Brain microvascular endothelial cell (primary cell): ENCODE measurements at regions of chr6 and their contacts with region 1.

Region 1: GRCh38 chr6:140052756-140053729 is 678.6 kb upstream of the CITED2 start:
- DNase-seq: peak; percentile 51
- H3K4me3 ChIP-seq: no peak overlapping the region
- H3K27ac ChIP-seq: peak overlapping the region; percentile 92
- H3K27me3 ChIP-seq: no peaks in the 10 kb centered on the region
- CTCF ChIP-seq: peak; percentile 54

Region 2: DNA sequence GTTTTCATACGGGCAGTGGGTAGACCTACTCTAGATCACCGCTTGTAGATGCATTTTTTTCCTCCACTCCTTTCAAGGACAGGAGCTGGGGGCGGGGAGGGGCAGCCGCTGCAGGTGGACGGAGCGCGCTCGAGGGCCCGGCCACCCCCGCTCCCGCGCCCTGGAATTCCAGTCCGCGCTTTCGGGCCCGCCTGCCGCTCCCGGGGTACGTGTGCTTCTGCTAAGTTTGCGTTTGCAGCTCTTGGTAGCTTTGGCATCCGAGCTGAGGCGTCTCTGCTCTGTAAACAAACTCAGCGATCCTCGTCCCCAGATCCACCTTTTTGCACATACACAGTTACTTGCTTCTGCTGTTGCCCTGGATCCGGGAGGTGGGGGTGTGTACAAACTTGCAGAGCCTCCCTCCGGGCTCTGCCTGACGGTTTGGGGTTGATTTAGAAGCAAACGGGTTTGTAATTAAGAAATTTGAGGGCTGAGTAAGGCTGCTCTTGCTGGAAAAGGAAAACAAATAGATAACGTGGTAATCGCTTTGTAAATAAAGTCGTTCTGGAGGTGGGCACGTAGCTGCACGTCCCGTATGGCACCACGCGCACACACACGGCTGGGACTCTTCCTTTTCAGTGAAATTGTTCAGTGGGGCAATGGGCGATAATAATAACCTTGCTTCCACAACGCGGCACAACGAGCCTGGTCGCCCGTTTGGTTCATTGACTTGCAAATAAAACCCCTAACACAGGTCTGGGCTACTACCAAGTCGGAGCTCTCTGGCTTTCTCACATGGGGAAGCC is 677.6 kb before region 1 on chr6:
- in situ Hi-C with region 1: loop called (anchors 10 kb)
- DNase-seq: peak; percentile 97
- H3K4me3 ChIP-seq: peak overlapping the region; percentile 96
- H3K27ac ChIP-seq: peak overlapping the region; percentile 91
- H3K27me3 ChIP-seq: no peaks in the 10 kb centered on the region
- CTCF ChIP-seq: peak; percentile 13

Region 3: DNA sequence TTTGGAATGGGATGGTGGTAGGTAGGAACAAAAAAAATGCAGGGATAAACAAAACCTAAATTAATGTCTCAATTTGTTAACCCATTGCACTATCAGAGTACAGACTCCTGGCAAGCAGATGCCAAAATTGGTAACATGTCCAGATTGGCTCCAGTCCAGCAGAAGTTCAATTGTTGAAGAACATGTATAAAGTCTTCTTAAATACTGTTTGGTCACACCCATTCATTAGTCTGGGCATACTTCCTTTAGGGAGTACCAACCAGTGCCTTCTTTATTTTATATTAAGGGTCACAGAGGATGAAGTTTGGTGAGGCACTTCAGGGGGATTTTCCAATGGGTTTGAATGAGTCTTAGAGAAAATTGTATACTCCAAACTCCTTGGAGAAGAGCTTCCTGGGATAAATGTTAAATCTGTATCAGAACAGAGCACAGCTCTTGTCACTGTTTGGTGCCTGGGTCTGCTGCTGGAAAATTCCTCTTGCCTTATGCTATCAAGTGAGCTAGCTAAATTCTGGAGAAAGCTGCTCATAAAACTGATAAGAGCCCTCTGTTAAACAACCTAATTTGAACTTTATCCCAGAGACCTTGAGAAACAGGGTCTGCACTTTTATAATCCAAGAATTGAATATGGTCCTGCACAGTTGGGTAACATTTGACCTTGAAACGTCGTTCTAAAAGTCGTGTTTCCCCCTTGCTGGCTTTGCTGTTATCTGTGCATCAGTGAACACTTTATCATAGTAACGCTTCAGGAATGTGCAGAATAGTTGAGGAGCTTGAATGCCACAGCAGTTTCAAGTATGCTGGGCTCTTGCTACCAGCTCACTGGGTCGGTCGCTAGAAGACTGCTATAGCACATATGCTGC is 344.5 kb before region 1 on chr6:
- in situ Hi-C with region 1: no loop called
- DNase-seq: peak; percentile 88
- H3K4me3 ChIP-seq: no peak overlapping the region
- H3K27ac ChIP-seq: peak overlapping the region; percentile 70
- H3K27me3 ChIP-seq: no peaks in the 10 kb centered on the region
- CTCF ChIP-seq: no peak

Region 4: DNA sequence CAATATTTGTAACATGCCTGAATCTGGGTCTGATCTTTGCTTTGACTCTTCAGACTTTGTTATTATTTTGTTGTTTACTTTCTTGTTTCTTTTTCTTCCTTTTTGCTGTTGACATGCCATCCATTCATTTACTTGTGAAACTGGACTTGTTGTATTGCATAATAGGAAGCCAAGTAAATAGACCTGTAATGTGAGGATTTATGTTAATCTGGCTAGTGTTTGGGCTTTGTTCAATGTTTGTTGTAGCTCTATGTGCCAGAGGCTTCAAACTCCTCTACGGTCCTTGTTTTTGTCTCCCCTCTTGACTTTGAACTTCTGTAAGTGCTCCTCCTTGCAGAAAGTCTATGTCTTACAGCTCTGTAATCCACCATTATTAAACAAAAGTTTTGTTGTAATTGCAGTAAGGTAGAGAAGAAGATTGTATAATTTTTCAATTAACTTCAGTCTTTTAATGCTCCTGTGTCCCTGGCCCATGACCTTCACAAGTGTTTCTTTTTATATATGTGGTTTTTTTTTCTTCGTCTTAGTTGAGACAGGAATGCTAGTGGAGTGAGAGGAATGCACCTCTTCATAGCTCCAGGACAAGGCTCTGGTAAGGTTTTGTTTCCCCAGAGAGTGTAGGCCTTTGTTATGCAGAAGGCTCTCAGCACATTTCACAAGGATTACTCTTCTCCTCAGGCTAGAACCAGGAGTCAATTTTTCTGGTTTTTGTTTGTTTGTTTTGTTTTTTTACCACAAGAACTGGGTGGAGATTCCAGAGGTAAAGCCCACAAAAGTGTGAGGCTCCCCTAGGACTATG is 383.2 kb after region 1 on chr6:
- in situ Hi-C with region 1: no loop called
- DNase-seq: peak; percentile 69
- H3K4me3 ChIP-seq: no peak overlapping the region
- H3K27ac ChIP-seq: peak overlapping the region; percentile 12
- H3K27me3 ChIP-seq: no peaks in the 10 kb centered on the region
- CTCF ChIP-seq: no peak